Mammary epithelial cell (primary cell): ENCODE measurements at regions of chr22 and their contacts with region 1.

Region 1: DNA sequence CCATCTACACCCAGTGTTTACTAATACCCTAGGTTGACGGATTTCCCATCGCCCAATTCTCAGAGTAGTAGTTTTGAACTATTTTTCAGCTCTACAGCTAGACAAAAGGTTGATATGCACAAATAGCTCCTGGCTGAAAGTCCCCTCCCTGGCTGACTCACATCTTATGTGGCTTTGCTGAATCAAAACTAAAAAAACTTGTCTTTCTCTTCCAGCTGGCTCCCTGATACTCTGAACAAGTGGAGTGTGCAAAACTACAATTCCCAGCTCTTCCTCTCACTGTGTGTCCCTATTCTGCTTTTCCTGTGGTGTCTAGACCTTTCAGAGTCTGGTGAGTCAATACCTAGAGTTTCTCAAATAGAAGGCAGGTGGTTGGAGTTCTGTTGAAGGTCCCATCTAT is 12.7 kb upstream of the LARGE1 start:
- DNase-seq: peak; percentile 59
- H3K4me3 ChIP-seq: no peak overlapping the region
- H3K27ac ChIP-seq: no peak overlapping the region
- H3K4me1 ChIP-seq: no peaks in the 10 kb centered on the region
- H3K27me3 ChIP-seq: no peaks in the 10 kb centered on the region
- CTCF ChIP-seq: no peak

Region 2: DNA sequence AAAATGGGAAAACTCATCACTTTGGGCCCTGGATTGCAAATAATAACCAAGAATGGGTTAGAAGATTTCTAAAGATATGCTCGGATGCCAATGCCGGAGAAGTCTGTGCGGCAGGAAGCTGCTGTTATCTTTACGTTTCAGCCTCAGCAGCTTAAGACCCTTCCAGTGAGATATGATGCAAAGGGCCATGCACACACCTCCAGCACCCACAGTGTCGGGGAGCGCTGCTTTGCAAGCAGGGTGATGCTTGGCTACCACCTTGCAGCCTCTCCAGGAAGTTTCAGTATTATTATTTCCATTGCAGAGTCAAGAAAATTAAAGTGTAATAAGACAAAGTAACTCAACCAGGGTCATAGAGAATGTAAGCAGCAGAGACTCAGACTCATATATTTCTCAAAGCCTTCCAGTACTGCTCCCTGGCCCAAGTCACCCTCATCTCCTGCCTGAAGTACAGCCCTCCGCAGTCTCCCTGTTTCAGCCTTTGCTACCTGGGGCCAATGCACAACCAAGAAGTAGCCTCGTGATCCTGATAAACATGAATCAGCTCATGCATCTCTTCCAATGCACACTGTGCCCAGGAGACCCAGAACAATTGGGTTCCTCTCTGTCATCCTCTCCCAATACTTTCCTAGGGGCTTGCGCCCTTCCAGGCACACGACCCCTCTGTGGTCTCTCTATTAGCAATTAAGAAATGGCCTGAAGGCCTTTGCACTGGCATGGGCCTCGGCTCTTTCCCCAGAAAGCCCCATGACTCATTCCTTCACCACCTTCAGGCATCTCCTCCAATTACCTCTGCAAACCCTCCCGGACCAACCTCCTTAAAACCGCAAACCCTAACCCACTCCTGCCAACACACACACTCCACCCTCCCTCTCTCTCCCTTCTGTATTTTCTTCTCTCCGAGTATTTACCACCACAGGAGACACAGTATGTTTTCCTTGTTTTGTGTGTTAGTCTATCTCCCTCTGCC is 49.7 kb before region 1 on chr22:
- CTCF ChIA-PET with region 1: no interaction called
- dilution Hi-C with region 1: no loop called
- in situ Hi-C with region 1: no loop called
- intact Hi-C with region 1: no loop called
- DNase-seq: peak; percentile 34
- H3K4me3 ChIP-seq: no peak overlapping the region
- H3K27ac ChIP-seq: no peak overlapping the region
- H3K4me1 ChIP-seq: no peaks in the 10 kb centered on the region
- H3K27me3 ChIP-seq: no peaks in the 10 kb centered on the region
- CTCF ChIP-seq: no peak

Region 3: GRCh38 chr22:34105461-34106062 is 172.6 kb after region 1 on chr22:
- CTCF ChIA-PET with region 1: no interaction called
- dilution Hi-C with region 1: no loop called
- in situ Hi-C with region 1: loop called in 1 of 2 experiments (anchors 10 kb)
- intact Hi-C with region 1: no loop called
- DNase-seq: peak; percentile 20
- H3K4me3 ChIP-seq: no peak overlapping the region
- H3K27ac ChIP-seq: no peak overlapping the region
- H3K4me1 ChIP-seq: no peaks in the 10 kb centered on the region
- H3K27me3 ChIP-seq: no peaks in the 10 kb centered on the region
- CTCF ChIP-seq: peak; percentile 9 to 18

Region 4: GRCh38 chr22:34129691-34130486 is 196.9 kb after region 1 on chr22:
- CTCF ChIA-PET with region 1: no interaction called
- dilution Hi-C with region 1: no loop called
- in situ Hi-C with region 1: no loop called
- intact Hi-C with region 1: no loop called
- DNase-seq: no peak
- H3K4me3 ChIP-seq: no peak overlapping the region
- H3K27ac ChIP-seq: no peak overlapping the region
- H3K4me1 ChIP-seq: no peaks in the 10 kb centered on the region
- H3K27me3 ChIP-seq: no peaks in the 10 kb centered on the region
- CTCF ChIP-seq: no peak